Activated T-helper 2 cell treated with anti-CD3 and anti-CD28 coated beads, Interferon-gamma antibody, Interleukin-2, Interleukin-4, amounts not matched to agents 10 μg/mL and 5 μg/mL and 100 μg/mL, durations not matched to agents 14 hours and 24 hours and 36 hours (primary cell): ENCODE measurements at regions of chr2 and their contacts with region 1.

Region 1: GRCh38 chr2:8681786-8682692 is at the start of gene ID2:
- DNase-seq: peak; percentile 99
- H3K4me3 Mint-ChIP-seq: peak within 1 kb of the TSS; percentile 100
- H3K27ac Mint-ChIP-seq: peak within 1 kb of the TSS; percentile 98
- H3K4me1 Mint-ChIP-seq: peaks cover 28% of the 10 kb centered on the region
- H3K27me3 Mint-ChIP-seq: peaks cover 10% of the 10 kb centered on the region
- total RNA-seq, gene ID2: 423 and 431 TPM in 2 replicates

Region 2: DNA sequence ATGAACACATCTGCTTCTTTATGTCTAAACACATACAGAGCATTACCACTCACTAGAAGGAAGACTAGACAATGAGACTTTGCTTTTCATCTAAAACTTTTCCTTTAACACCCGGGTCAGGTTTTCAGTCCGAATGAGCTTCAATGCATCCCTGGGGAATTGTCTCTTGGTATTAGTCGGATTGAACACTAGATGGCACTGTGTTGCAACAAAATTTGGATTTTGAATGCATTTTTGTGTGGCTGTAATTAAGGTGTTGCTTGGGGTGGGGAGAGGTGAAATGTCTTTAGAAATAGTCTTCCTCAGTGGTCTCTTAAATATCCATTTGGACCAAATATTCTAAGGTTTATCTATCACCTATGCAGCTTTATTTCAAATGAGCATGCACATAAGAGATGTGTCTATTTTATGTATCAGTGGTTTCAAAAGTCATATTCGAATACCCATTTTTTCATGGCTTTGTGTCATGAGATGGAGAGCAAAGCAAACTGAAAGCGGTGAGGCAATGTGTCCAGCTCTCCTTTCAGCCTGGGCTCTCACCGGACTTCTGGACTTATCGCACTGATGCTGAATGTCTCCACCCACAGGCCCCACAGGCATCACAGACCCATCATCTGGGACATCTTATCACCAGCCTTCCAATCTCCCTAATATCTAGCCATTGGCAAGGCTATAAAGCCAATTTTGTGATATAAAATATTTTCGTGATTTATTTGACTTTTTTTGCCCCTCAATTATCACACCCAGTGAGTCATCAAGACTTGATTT is 1254.6 kb before region 1 on chr2:
- intact Hi-C with region 1: loop called (anchors 2 kb)
- DNase-seq: no peak
- H3K4me3 Mint-ChIP-seq: peak overlapping the region; percentile 49
- H3K27ac Mint-ChIP-seq: peak overlapping the region; percentile 78
- H3K4me1 Mint-ChIP-seq: peaks cover 45% of the 10 kb centered on the region
- H3K27me3 Mint-ChIP-seq: no peaks in the 10 kb centered on the region

Region 3: GRCh38 chr2:7725171-7725849 is 956.7 kb before region 1 on chr2:
- intact Hi-C with region 1: loop called (anchors 10 kb)
- DNase-seq: peak; percentile 51
- H3K4me3 Mint-ChIP-seq: peak overlapping the region; percentile 89
- H3K27ac Mint-ChIP-seq: peak overlapping the region; percentile 90
- H3K4me1 Mint-ChIP-seq: peaks cover 58% of the 10 kb centered on the region
- H3K27me3 Mint-ChIP-seq: no peaks in the 10 kb centered on the region

Region 4: DNA sequence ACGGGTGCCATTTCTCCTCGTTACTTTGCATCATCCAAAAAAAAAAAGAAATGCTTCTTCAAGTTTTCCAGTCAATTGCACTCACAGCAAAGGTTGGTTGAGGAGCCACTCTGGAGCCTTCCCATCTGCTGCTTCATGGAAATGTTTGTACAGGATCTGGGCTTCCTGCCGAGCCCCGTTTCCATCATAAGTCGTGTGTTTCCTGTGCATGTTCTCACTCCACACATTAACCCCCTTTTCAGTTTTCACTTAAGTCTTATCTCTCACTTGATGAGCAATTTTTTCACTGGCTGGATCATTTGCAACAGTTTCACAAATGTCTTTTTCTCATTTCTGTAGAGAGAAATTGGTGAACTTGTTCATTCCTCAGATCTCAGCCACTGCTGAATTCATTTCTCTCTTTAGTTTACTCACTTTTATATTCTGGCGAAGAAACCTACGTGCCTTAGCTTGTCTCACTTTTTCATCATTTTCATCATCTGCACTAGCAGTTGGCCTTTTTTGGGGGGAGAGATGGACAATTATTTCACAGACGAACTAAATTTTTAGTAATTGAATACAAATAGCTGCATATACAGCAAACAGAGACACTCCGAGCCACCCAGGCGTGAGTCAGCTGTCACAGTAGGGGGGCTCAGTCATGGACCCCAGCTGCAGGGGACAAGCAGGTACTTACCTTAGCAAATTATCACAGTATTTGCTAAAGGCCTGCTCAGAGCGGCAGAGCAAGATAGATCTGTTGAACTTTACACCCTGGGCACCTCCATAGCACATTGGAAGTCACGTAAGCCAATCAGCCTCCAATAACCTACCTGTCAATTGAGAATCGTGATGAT is 751.0 kb before region 1 on chr2:
- intact Hi-C with region 1: loop called (anchors 2 kb)
- DNase-seq: no peak
- H3K4me3 Mint-ChIP-seq: peak overlapping the region; percentile 17
- H3K27ac Mint-ChIP-seq: peak overlapping the region; percentile 85
- H3K4me1 Mint-ChIP-seq: peaks cover 36% of the 10 kb centered on the region
- H3K27me3 Mint-ChIP-seq: no peaks in the 10 kb centered on the region

Region 5: DNA sequence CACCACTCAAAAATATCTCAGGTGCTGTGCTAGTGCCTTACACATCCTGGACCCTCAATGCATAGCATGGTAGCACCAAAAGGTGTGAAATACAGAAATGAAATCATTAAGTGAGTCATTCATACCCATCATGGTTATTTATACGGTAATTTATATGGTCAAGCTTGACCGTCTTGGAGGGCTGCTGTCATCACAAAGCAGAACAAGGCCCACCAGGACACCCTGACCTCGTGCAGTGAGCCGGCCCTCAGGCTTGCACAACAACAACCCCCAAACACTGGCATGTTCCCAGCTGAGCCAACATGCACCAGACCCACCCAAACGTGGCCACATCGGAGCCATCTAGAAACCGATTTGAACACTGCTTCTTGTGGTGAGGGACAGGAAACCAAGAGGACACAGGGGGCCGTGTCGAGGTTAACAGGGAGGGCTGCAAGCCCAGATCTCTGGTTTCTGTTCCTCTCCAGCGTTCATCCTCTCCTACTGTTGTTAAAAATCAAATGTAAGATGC is 378.7 kb before region 1 on chr2:
- intact Hi-C with region 1: loop called (anchors 2 kb)
- DNase-seq: peak; percentile 82
- H3K4me3 Mint-ChIP-seq: peak overlapping the region; percentile 49
- H3K27ac Mint-ChIP-seq: peak overlapping the region; percentile 47
- H3K4me1 Mint-ChIP-seq: peaks cover 81% of the 10 kb centered on the region
- H3K27me3 Mint-ChIP-seq: no peaks in the 10 kb centered on the region

Region 6: DNA sequence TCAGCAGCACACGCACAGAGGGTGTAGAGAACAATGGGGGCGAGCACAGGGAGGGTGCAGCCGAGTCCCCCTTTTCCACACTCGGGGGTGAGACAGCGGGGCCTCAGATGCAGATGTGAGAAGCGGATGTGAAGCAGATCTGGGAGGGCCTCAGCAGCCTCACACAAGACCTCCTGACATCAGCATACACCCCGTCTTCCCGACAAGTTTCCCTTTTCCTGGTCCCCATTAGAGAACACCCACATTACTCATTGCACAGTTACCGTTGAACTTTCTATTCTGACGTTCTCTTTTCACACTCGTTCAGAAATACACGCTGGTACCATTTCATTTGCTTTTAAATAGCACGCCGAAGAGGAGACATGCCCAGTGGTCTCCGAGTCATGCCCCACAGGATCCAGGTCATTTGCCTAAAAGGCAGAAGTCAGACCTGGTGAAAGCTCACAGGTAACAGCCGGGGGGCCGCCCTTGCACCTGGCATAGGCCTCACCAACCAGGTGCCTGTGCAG is 129.7 kb before region 1 on chr2:
- intact Hi-C with region 1: no loop called
- DNase-seq: no peak
- H3K4me3 Mint-ChIP-seq: no peak overlapping the region
- H3K27ac Mint-ChIP-seq: no peak overlapping the region
- H3K4me1 Mint-ChIP-seq: peaks cover 20% of the 10 kb centered on the region
- H3K27me3 Mint-ChIP-seq: no peaks in the 10 kb centered on the region

Region 7: GRCh38 chr2:8586457-8587051 is 95.5 kb before region 1 on chr2:
- intact Hi-C with region 1: loop called (anchors 2 kb)
- DNase-seq: no peak
- H3K4me3 Mint-ChIP-seq: peak overlapping the region; percentile 26
- H3K27ac Mint-ChIP-seq: peak overlapping the region; percentile 57
- H3K4me1 Mint-ChIP-seq: peaks cover 52% of the 10 kb centered on the region
- H3K27me3 Mint-ChIP-seq: peaks cover 16% of the 10 kb centered on the region